Right ventricle myocardium superior (tissue), 1 donor: ENCODE measurements at regions of chr12 and their contacts with region 1.

Region 1: DNA sequence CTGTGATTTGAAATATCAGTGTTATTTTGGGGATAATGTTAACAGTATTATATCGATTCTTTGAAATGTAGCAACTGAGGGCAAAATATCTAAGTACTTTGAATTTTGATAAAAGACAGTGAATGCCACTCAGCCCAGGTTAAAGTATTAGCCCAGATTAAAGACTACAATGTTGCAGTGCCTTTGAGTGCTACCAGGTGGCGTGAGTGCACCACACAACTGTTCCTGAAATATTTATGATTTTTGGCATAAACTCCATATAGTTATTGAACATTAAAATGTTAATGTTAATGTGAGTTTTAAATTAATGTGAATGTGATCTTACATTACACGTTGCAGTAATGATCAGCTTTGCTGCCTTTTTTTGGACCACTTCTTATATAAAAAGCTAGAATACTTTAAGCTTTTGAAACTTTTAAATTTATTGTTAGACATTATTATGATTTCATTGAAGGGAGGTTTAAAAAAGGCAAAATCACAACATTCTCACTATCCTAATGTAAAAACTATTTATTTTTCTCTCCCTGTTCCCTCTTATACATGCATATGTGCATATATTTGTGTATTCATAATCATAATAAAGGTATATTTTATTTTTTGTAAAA is 22.5 kb downstream of the MRPS35 start:
- DNase-seq: no peak
- ATAC-seq: no peak

Region 2: GRCh38 chr12:27936196-27936595 is 203.0 kb after region 1 on chr12:
- intact Hi-C with region 1: loop called (anchors 10 kb)
- DNase-seq: no peak
- ATAC-seq: no peak